Heart left ventricle (tissue), 16 donors: ENCODE measurements at regions of chr2 and their contacts with region 1.

Region 1: GRCh38 chr2:142796161-142796560 is 81.3 kb upstream of the KYNU start:
- DNase-seq: no peak
- ATAC-seq: no peak
- H3K4me3 ChIP-seq: no peak overlapping the region
- H3K27ac ChIP-seq: peak overlapping the region in 1 of 12 donors; percentile 39
- H3K4me1 ChIP-seq: no peaks in the 10 kb centered on the region
- H3K27me3 ChIP-seq: no peaks in the 10 kb centered on the region
- CTCF ChIP-seq: peak in 4 of 12 donors; percentile 13 to 45 (median 20)
- POLR2A ChIP-seq: no peak

Region 2: GRCh38 chr2:142714600-142714999 is 81.6 kb before region 1 on chr2:
- intact Hi-C with region 1: no loop called
- DNase-seq: no peak
- ATAC-seq: no peak
- H3K4me3 ChIP-seq: no peak overlapping the region
- H3K27ac ChIP-seq: no peak overlapping the region
- H3K4me1 ChIP-seq: peaks cover 0 to 14% (median 0%) of the 10 kb centered on the region in 12 donors
- H3K27me3 ChIP-seq: no peaks in the 10 kb centered on the region
- CTCF ChIP-seq: no peak
- POLR2A ChIP-seq: no peak

Region 3: DNA sequence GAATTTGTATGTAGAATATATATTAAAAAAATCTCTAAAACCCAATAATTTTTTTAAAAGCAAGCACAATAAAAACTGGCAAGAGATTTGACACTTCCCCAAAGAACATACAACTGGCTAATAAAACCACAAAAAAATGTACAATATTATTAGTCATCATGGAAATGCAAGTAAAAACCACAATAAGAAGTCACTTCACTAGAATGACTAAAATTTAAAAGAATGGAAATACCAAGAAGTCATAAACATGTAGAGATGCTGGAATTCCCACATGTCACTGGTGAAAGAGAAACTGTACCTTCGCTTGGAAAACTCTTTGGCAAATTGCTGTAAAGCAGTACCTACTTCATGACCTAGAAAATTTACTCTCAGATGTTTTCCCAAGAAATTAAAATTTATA is 37.9 kb after region 1 on chr2:
- intact Hi-C with region 1: no loop called
- DNase-seq: no peak
- ATAC-seq: no peak
- H3K4me3 ChIP-seq: no peak overlapping the region
- H3K27ac ChIP-seq: no peak overlapping the region
- H3K4me1 ChIP-seq: no peaks in the 10 kb centered on the region
- H3K27me3 ChIP-seq: no peaks in the 10 kb centered on the region
- CTCF ChIP-seq: no peak
- POLR2A ChIP-seq: no peak

Region 4: GRCh38 chr2:142974288-142975024 is 178.3 kb after region 1 on chr2:
- intact Hi-C with region 1: loop called in 1 of 10 experiments (anchors 5 kb)
- DNase-seq: no peak
- ATAC-seq: no peak
- H3K4me3 ChIP-seq: no peak overlapping the region
- H3K27ac ChIP-seq: no peak overlapping the region
- H3K4me1 ChIP-seq: peaks cover 0 to 5% (median 0%) of the 10 kb centered on the region in 12 donors
- H3K27me3 ChIP-seq: no peaks in the 10 kb centered on the region
- CTCF ChIP-seq: no peak
- POLR2A ChIP-seq: no peak

Region 5: GRCh38 chr2:142980561-142981378 is 184.6 kb after region 1 on chr2:
- intact Hi-C with region 1: loop called in 5 of 10 experiments (anchors 5 to 10 kb)
- DNase-seq: no peak
- ATAC-seq: no peak
- H3K4me3 ChIP-seq: no peak overlapping the region
- H3K27ac ChIP-seq: no peak overlapping the region
- H3K4me1 ChIP-seq: no peaks in the 10 kb centered on the region
- H3K27me3 ChIP-seq: no peaks in the 10 kb centered on the region
- CTCF ChIP-seq: peak; percentile 43 to 73 (median 58)
- POLR2A ChIP-seq: no peak

Region 6: GRCh38 chr2:142989273-142990204 is 193.4 kb after region 1 on chr2:
- intact Hi-C with region 1: loop called in 4 of 10 experiments (anchors 5 to 10 kb)
- DNase-seq: no peak
- ATAC-seq: no peak
- H3K4me3 ChIP-seq: no peak overlapping the region
- H3K27ac ChIP-seq: no peak overlapping the region
- H3K4me1 ChIP-seq: peaks cover 0 to 4% (median 0%) of the 10 kb centered on the region in 12 donors
- H3K27me3 ChIP-seq: peaks cover 0 to 3% (median 0%) of the 10 kb centered on the region in 9 donors
- CTCF ChIP-seq: peak; percentile 36 to 75 (median 52)
- POLR2A ChIP-seq: no peak